ENCODE measurements at regions of chr1 and their contacts with region 1.

Region 1: DNA sequence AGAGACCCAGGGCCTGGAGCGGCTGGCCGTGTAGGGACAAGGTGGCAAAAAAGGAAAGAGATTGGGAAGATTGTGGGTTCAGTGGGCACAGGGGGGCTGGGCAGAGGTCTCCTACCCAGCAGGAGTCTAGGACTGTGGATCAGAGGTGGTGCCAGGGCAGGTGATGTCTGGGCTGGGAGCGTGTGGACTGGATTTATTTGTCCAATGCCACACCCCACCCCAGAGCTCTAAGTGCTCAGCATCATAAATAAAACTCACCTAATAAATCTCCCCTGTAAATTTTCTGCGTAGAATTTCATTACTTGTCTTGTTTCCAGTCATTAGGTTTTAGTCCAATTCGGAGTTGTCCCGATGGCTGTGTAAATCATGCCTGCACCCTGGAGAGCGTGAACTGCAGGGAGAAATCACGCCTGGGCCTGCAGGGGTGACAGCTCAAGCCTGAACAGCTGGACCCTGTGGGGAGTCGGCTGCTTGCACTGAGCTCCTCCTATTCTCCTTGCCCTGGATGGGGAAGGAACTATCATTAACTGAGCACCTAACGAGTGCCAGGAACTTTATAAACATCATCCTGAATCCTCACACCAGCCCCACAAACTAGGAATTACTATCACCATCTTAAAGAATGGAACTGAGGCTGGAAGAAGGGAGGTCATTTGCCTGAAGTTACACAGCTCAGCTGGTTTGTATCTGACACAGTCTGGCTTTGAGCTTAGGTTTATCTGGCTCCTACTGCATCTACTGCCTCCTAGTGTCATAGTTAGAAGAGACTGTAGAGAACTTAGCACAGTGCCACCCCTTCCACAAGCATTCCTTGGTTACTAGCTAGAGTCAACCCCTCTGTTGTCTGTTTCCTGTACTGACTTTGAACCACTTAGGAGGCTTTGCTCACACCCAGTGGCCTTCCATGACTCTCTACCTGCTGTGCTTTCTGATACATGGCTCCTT is 25.0 kb upstream of the POU3F1 start:
- DNase-seq: no peak
- H3K4me3 ChIP-seq: no peak overlapping the region
- CTCF ChIP-seq: peak; percentile 57

Region 2: DNA sequence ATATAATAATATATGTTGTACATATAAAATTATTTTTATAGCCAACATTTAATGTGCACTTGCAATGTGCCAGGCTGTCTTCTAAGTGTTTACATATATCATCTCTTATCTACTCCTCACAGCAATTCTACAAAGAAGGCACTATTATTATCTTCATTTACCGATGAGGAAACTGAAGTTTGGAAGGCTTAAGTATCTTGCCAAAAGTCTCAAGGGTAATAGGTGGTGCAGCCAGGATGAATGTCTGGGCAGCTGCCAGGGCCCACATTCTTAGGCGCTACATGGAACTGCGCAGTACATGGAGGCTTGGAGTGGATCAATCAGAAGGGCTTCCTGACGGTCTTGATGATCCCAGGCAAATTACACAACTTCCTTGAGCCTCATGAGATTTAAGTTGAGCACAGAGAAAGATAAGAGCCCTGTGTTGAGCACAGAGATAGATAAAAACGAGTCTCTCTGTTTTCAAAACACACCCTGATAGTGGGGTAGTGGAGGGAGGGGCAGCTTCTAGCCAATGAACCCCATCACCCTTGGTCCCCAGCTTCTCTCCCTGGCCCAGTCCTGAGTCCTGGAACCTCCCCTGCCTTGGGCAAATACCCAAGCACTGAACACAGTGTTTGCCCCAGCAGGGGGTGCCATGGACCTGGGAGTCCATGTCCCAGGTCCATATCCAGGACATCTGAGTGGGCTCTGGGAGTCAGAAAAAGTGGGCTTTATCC is 34.2 kb before region 1 on chr1:
- CTCF ChIA-PET with region 1: interaction called, 12 read pairs
- POLR2A ChIA-PET with region 1: no interaction called
- DNase-seq: no peak
- H3K4me3 ChIP-seq: no peak overlapping the region
- CTCF ChIP-seq: peak; percentile 20

Measured in AG04449 (cell line).